Calu3 (cell line): ENCODE measurements at regions of chr3 and their contacts with region 1.

Region 1: GRCh38 chr3:63386556-63386955 is 108.4 kb downstream of the SYNPR start:
- DNase-seq: no peak
- H3K4me3 Mint-ChIP-seq: no peak overlapping the region
- H3K27ac Mint-ChIP-seq: no peak overlapping the region
- H3K4me1 Mint-ChIP-seq: peaks cover 26% of the 10 kb centered on the region
- H3K27me3 Mint-ChIP-seq: peaks cover 7% of the 10 kb centered on the region
- CTCF ChIP-seq: no peak

Region 2: GRCh38 chr3:62898530-62899496 is 487.7 kb before region 1 on chr3:
- CTCF ChIA-PET with region 1: no interaction called
- intact Hi-C with region 1: no loop called
- DNase-seq: no peak
- H3K4me3 Mint-ChIP-seq: no peak overlapping the region
- H3K27ac Mint-ChIP-seq: no peak overlapping the region
- H3K4me1 Mint-ChIP-seq: no peaks in the 10 kb centered on the region
- H3K27me3 Mint-ChIP-seq: peaks cover 15% of the 10 kb centered on the region
- CTCF ChIP-seq: no peak

Region 3: DNA sequence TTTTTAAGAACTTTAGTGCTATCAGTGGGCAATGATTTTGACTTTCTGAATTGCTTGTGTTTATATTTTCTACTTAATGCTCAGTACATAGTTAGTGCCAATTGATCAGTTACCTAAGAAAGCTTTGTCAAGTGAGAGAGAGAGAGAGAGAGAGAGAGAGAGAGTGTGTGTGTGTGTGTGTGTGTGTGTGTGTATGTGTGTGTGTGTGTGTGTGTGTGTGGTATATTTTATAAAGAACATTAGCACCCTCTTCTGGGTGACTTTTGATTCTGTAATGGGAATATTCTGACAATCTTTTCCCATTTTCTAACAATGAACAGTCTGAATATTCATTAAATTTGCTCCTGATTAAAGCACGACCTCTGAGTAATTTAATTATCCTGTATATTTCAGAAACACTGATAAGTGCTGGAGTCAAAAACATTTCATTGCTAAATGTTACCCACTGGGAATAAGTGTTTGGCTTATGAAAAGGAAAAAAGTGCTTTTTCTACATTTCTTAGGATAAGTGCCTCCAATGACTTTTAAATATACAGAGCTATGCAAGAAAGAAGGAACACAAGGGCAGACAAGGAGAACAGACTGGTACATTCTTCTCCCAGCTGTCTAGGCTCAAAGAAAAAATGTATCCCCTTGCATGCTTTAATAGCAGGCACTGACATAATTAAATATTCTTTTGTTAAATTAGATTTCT is 140.9 kb before region 1 on chr3:
- CTCF ChIA-PET with region 1: no interaction called
- intact Hi-C with region 1: no loop called
- DNase-seq: no peak
- H3K4me3 Mint-ChIP-seq: no peak overlapping the region
- H3K27ac Mint-ChIP-seq: no peak overlapping the region
- H3K4me1 Mint-ChIP-seq: no peaks in the 10 kb centered on the region
- H3K27me3 Mint-ChIP-seq: no peaks in the 10 kb centered on the region
- CTCF ChIP-seq: no peak

Region 4: DNA sequence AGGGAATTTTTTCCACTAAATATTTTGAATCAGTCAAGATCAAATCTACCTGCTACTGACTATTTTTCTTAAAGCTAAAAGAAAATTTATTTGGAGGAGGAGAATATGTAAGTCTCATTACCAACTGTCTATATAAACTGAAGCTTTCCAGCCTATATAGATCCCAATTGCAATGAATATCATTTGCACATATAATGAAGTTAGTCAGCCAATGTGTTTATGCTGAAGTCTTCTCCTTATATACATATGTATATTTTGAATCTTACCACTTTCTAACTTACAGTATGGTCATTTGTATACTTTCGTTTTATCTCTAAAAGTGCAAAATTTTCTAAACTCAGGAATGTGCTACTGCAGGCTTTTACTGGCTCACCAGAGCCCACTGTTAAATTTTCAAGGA is 28.1 kb after region 1 on chr3:
- CTCF ChIA-PET with region 1: no interaction called
- intact Hi-C with region 1: loop called (anchors 1 kb)
- DNase-seq: no peak
- H3K4me3 Mint-ChIP-seq: no peak overlapping the region
- H3K27ac Mint-ChIP-seq: no peak overlapping the region
- H3K4me1 Mint-ChIP-seq: no peaks in the 10 kb centered on the region
- H3K27me3 Mint-ChIP-seq: no peaks in the 10 kb centered on the region
- CTCF ChIP-seq: no peak